Lower leg skin (tissue), 4 donors: ENCODE measurements at regions of chr9 and their contacts with region 1.

Region 1: DNA sequence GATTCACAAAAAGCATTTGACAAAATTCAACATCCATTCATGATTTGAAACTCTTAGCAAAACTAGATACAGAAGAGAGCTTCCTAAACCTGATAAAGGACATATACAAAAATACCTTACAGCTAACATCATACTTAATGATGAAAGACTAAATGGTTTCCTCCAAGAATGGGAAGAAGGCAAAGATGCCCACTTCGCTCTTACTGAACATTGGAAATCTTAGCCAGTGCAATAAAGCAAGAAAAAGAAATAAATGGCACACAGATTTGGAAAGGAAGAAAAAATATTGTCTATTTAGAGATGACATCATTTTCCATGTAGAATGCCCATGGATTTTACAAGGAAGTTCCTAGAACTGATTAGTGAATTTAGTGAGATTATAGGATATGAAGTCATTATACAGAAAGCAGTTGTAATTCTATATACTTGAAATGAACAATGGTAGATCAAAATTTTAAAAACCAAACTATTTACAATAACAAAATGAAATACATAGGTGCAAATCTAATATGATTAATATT is 64.4 kb downstream of the NAA35 start:
- DNase-seq: no peak
- H3K4me3 ChIP-seq: no peak overlapping the region
- CTCF ChIP-seq: no peak
- POLR2A ChIP-seq: no peak

Region 2: DNA sequence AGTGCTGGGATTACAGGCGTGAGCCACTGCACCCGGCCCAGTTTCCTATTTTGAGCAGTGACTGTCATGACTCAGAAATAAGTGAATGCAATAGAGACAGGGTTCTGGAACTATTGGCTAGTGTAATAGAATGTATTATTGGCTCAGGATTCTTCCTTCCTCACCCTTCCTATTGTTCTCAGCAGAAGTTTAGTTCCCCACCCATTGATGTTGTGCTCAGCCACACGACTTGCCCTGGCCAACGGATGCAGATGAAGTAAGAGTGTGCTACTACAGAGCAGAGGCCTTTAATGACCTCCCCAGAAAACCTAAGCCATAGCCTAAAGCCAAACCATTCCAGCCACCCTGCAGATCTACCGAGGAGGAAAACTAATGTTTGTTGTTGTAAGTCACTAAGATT is 551.5 kb before region 1 on chr9:
- intact Hi-C with region 1: no loop called
- DNase-seq: peak in 1 of 2 donors; percentile 35
- H3K4me3 ChIP-seq: no peak overlapping the region
- CTCF ChIP-seq: no peak
- POLR2A ChIP-seq: no peak

Region 3: GRCh38 chr9:86075132-86076109 is 70.1 kb after region 1 on chr9:
- intact Hi-C with region 1: loop called (anchors 2 kb)
- DNase-seq: no peak
- H3K4me3 ChIP-seq: no peak overlapping the region
- CTCF ChIP-seq: no peak
- POLR2A ChIP-seq: no peak